MCF 10A (cell line): ENCODE measurements at regions of chr10 and their contacts with region 1.

Region 1: GRCh38 chr10:3785257-3785850 is 345 bp upstream of the KLF6 start:
- DNase-seq: peak; percentile 98
- H3K4me3 Mint-ChIP-seq: peak overlapping the region; percentile 96
- H3K27ac Mint-ChIP-seq: peak overlapping the region; percentile 100
- H3K4me1 Mint-ChIP-seq: peaks cover 17% of the 10 kb centered on the region
- H3K27me3 Mint-ChIP-seq: no peaks in the 10 kb centered on the region
- CTCF ChIP-seq: no peak

Region 2: GRCh38 chr10:2351566-2351965 is 1433.8 kb before region 1 on chr10:
- CTCF ChIA-PET with region 1: no interaction called
- POLR2A ChIA-PET with region 1: no interaction called
- intact Hi-C with region 1: no loop called
- DNase-seq: no peak
- H3K4me3 Mint-ChIP-seq: no peak overlapping the region
- H3K27ac Mint-ChIP-seq: no peak overlapping the region
- H3K4me1 Mint-ChIP-seq: no peaks in the 10 kb centered on the region
- H3K27me3 Mint-ChIP-seq: no peaks in the 10 kb centered on the region
- CTCF ChIP-seq: no peak

Region 3: GRCh38 chr10:3482200-3483138 is 302.9 kb before region 1 on chr10:
- CTCF ChIA-PET with region 1: interaction called, 3 read pairs
- POLR2A ChIA-PET with region 1: interaction called, 11 read pairs
- intact Hi-C with region 1: no loop called
- DNase-seq: peak; percentile 96
- H3K4me3 Mint-ChIP-seq: peak overlapping the region; percentile 55
- H3K27ac Mint-ChIP-seq: peak overlapping the region; percentile 79
- H3K4me1 Mint-ChIP-seq: peaks cover 22% of the 10 kb centered on the region
- H3K27me3 Mint-ChIP-seq: no peaks in the 10 kb centered on the region
- CTCF ChIP-seq: no peak

Region 4: GRCh38 chr10:3570855-3571266 is 214.5 kb before region 1 on chr10:
- CTCF ChIA-PET with region 1: no interaction called
- POLR2A ChIA-PET with region 1: no interaction called
- intact Hi-C with region 1: no loop called
- DNase-seq: no peak
- H3K4me3 Mint-ChIP-seq: no peak overlapping the region
- H3K27ac Mint-ChIP-seq: no peak overlapping the region
- H3K4me1 Mint-ChIP-seq: no peaks in the 10 kb centered on the region
- H3K27me3 Mint-ChIP-seq: no peaks in the 10 kb centered on the region
- CTCF ChIP-seq: no peak

Region 5: GRCh38 chr10:3828404-3829155 is 43.2 kb after region 1 on chr10:
- CTCF ChIA-PET with region 1: no interaction called
- POLR2A ChIA-PET with region 1: interaction called, 118 read pairs
- intact Hi-C with region 1: no loop called
- DNase-seq: peak; percentile 55
- H3K4me3 Mint-ChIP-seq: peak overlapping the region; percentile 52
- H3K27ac Mint-ChIP-seq: peak overlapping the region; percentile 69
- H3K4me1 Mint-ChIP-seq: peaks cover 25% of the 10 kb centered on the region
- H3K27me3 Mint-ChIP-seq: no peaks in the 10 kb centered on the region
- CTCF ChIP-seq: no peak

Region 6: GRCh38 chr10:4073912-4074311 is 288.6 kb after region 1 on chr10:
- CTCF ChIA-PET with region 1: no interaction called
- POLR2A ChIA-PET with region 1: interaction called, 12 read pairs
- intact Hi-C with region 1: no loop called
- DNase-seq: peak; percentile 15
- H3K4me3 Mint-ChIP-seq: no peak overlapping the region
- H3K27ac Mint-ChIP-seq: peak overlapping the region; percentile 66
- H3K4me1 Mint-ChIP-seq: peaks cover 26% of the 10 kb centered on the region
- H3K27me3 Mint-ChIP-seq: no peaks in the 10 kb centered on the region
- CTCF ChIP-seq: no peak

Region 7: GRCh38 chr10:4344511-4344994 is 559.2 kb after region 1 on chr10:
- CTCF ChIA-PET with region 1: interaction called, 3 read pairs
- POLR2A ChIA-PET with region 1: interaction called, 65 read pairs
- intact Hi-C with region 1: loop called (anchors 1 kb)
- DNase-seq: peak; percentile 99
- H3K4me3 Mint-ChIP-seq: peak overlapping the region; percentile 48
- H3K27ac Mint-ChIP-seq: peak overlapping the region; percentile 99
- H3K4me1 Mint-ChIP-seq: peaks cover 26% of the 10 kb centered on the region
- H3K27me3 Mint-ChIP-seq: no peaks in the 10 kb centered on the region
- CTCF ChIP-seq: no peak

Region 8: DNA sequence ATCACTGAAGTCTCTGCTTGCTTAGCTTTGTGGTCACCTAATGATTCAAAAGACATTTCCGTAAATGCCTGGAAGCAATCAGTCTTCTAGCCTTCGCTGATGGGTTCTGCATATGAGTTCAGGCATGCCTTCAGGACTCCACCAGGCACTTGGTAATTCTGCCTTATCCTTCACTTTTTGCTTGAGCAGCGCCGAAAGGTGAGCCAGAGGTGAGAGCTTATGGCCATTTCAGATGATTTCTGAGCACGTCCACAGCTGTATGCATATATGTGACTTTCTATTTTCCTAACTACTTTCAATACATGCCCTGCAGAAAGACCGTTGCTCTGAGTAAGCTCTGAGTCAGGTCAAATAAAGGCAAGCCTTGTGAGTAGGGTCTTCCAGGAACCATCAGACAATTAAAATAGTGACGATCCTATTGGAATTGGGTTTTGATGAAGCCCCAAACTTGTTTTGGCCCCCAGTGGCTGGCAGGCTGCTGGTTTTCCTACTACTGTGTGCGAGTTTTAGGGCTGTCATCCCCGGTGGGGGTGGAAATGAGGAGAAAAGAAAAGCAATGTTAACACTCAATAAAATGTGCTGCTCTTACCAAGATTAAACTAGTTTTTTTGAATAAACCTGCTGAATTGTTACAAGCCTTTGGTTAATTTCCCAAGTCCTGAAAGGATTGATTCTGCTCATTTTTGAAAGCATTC is 886.2 kb after region 1 on chr10:
- CTCF ChIA-PET with region 1: no interaction called
- POLR2A ChIA-PET with region 1: interaction called, 120 read pairs
- intact Hi-C with region 1: no loop called
- DNase-seq: peak; percentile 72
- H3K4me3 Mint-ChIP-seq: peak overlapping the region; percentile 56
- H3K27ac Mint-ChIP-seq: peak overlapping the region; percentile 90
- H3K4me1 Mint-ChIP-seq: peaks cover 27% of the 10 kb centered on the region
- H3K27me3 Mint-ChIP-seq: no peaks in the 10 kb centered on the region
- CTCF ChIP-seq: no peak